ENCODE measurements at regions of chr1 and their contacts with region 1.

Region 1: GRCh38 chr1:210311726-210312493 is 16.8 kb upstream of the HHAT start:
- DNase-seq: no peak
- H3K4me3 ChIP-seq: peak overlapping the region in 45 of 59 donors; percentile 32 to 71 (median 53)
- H3K27ac ChIP-seq: peak overlapping the region in 9 of 59 donors; percentile 1 to 48 (median 28)
- H3K27me3 ChIP-seq: no peaks in the 10 kb centered on the region
- CTCF ChIP-seq: no peak

Region 2: DNA sequence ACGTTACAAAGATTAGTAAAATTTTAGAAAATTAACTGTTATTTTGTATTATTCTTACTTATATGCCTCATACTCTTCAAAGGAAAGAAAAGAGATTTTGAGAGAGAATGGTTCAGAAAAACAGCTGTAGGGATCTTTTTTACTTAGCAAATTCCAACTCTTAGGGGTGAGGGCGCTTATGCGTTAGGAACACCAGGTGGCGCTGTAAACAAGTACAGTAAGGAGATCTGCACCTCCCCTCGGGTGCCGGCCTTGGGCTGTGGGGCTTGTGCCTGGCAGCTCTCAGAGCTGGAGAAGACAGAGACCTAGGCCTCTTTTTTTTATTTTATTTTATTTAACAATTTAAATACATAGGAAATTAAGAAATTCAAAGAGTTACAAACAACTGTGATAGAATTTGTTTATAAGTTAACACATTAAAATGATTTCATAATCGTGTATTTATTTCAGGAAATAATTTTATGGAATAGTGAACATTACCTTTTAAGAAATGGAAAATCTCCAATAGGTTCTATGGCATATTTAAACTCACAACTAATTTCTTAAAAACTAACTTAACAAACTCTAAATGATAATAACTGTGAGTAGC is 451.5 kb before region 1 on chr1:
- intact Hi-C with region 1: loop called in 1 of 2 experiments (anchors 5 kb)
- DNase-seq: peak; percentile 77 to 91 (median 86)
- H3K4me3 ChIP-seq: no peak overlapping the region
- H3K27ac ChIP-seq: peak overlapping the region in 23 of 59 donors; percentile 1 to 78 (median 46)
- H3K27me3 ChIP-seq: peaks cover 0 to 3% (median 0%) of the 10 kb centered on the region in 45 donors
- CTCF ChIP-seq: peak; percentile 88 to 99 (median 96)

Region 3: GRCh38 chr1:210143465-210144062 is 168.3 kb before region 1 on chr1:
- intact Hi-C with region 1: loop called (anchors 2 to 5 kb)
- DNase-seq: peak; percentile 44 to 89 (median 61)
- H3K4me3 ChIP-seq: no peak overlapping the region
- H3K27ac ChIP-seq: no peak overlapping the region
- H3K27me3 ChIP-seq: no peaks in the 10 kb centered on the region
- CTCF ChIP-seq: peak; percentile 64 to 91 (median 78)

Region 4: GRCh38 chr1:210239349-210240111 is 72.4 kb before region 1 on chr1:
- intact Hi-C with region 1: loop called in 1 of 2 experiments (anchors 5 kb)
- DNase-seq: peak in 2 of 10 donors; percentile 26 to 54
- H3K4me3 ChIP-seq: no peak overlapping the region
- H3K27ac ChIP-seq: peak overlapping the region in 14 of 59 donors; percentile 3 to 92 (median 60)
- H3K27me3 ChIP-seq: no peaks in the 10 kb centered on the region
- CTCF ChIP-seq: peak in 54 of 56 donors; percentile 14 to 72 (median 51)

Region 5: GRCh38 chr1:210250998-210251679 is 60.8 kb before region 1 on chr1:
- intact Hi-C with region 1: loop called in 1 of 2 experiments (anchors 1 kb)
- DNase-seq: peak; percentile 55 to 89 (median 82)
- H3K4me3 ChIP-seq: peak overlapping the region; percentile 36 to 77 (median 65)
- H3K27ac ChIP-seq: peak overlapping the region; percentile 66 to 95 (median 88)
- H3K27me3 ChIP-seq: no peaks in the 10 kb centered on the region
- CTCF ChIP-seq: peak in 17 of 56 donors; percentile 6 to 39 (median 22)

Region 6: GRCh38 chr1:210400043-210400840 is 88.3 kb after region 1 on chr1:
- intact Hi-C with region 1: loop called in 1 of 2 experiments (anchors 5 kb)
- DNase-seq: peak; percentile 28 to 84 (median 62)
- H3K4me3 ChIP-seq: no peak overlapping the region
- H3K27ac ChIP-seq: peak overlapping the region in 1 of 59 donors; percentile 31
- H3K27me3 ChIP-seq: no peaks in the 10 kb centered on the region
- CTCF ChIP-seq: peak in 55 of 56 donors; percentile 44 to 98 (median 89)